ENCODE measurements at regions of chr16 and their contacts with region 1.

Region 1: GRCh38 chr16:30018731-30019158 is 4.3 kb upstream of the C16orf92 start:
- DNase-seq: peak; percentile 28
- H3K4me3 ChIP-seq: no peak overlapping the region
- H3K27ac ChIP-seq: no peak overlapping the region
- H3K4me1 ChIP-seq: peaks cover 5% of the 10 kb centered on the region
- H3K27me3 ChIP-seq: no peaks in the 10 kb centered on the region
- CTCF ChIP-seq: no peak

Region 2: GRCh38 chr16:29694384-29695195 is 324.2 kb before region 1 on chr16:
- CTCF ChIA-PET with region 1: no interaction called
- dilution Hi-C with region 1: loop called (anchors 5 kb)
- in situ Hi-C with region 1: no loop called
- intact Hi-C with region 1: no loop called
- DNase-seq: no peak
- H3K4me3 ChIP-seq: no peak overlapping the region
- H3K27ac ChIP-seq: no peak overlapping the region
- H3K4me1 ChIP-seq: no peaks in the 10 kb centered on the region
- H3K27me3 ChIP-seq: no peaks in the 10 kb centered on the region
- CTCF ChIP-seq: no peak

Region 3: GRCh38 chr16:29862884-29863668 is 155.7 kb before region 1 on chr16 and contains the start of gene CDIPT:
- CTCF ChIA-PET with region 1: no interaction called
- dilution Hi-C with region 1: no loop called
- in situ Hi-C with region 1: no loop called
- intact Hi-C with region 1: loop called (anchors 1 kb)
- DNase-seq: peak; percentile 92
- H3K4me3 ChIP-seq: peak within 1 kb of the TSS; percentile 83 to 97 (median 89)
- H3K27ac ChIP-seq: peak within 1 kb of the TSS; percentile 98
- H3K4me1 ChIP-seq: peaks cover 3% of the 10 kb centered on the region
- H3K27me3 ChIP-seq: no peaks in the 10 kb centered on the region
- CTCF ChIP-seq: peak; percentile 58 to 72
- total RNA-seq, gene CDIPT: 47.8 to 72.2 TPM

Region 4: DNA sequence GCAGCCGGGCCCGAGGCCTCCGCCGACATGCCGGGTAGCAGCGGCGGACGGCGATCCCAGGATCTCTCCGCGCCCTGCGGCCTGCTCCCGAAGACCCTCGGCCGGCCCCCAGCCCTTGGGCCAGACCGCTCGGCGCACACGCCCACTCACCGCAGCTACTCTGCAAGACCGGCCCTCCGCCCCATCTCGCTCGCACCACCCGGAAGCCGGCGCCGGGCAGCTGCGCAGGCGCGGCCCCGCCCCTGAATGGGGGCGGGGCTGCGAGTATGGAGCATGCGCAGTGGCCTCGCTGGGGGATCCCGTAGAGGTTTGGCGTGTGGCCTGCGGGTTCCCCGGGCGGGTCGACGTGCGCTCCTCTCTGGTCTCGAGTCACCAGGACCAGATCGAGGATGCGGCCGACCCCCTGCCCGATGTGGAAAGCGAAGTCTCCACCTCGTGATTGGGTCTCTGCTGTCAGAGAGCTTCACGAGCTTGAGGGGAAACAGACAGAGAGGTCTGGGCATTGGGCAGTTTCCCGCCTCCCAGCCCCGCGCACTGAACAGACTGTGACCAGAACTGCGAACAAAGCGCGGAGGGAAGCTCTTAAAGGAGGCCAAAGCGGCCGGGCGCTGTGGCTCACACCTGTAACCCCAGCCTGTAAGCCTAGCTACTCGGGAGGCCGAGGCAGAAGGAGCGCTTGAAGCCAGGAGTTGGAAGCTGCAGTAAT is 92.6 kb before region 1 on chr16 and contains the start of gene KCTD13:
- CTCF ChIA-PET with region 1: no interaction called
- dilution Hi-C with region 1: loop called (anchors 5 kb)
- in situ Hi-C with region 1: no loop called
- intact Hi-C with region 1: no loop called
- DNase-seq: peak; percentile 80
- H3K4me3 ChIP-seq: peak within 1 kb of the TSS; percentile 40 to 98 (median 89)
- H3K27ac ChIP-seq: peak within 1 kb of the TSS; percentile 63
- H3K4me1 ChIP-seq: peaks cover 10% of the 10 kb centered on the region
- H3K27me3 ChIP-seq: no peaks in the 10 kb centered on the region
- CTCF ChIP-seq: no peak
- total RNA-seq, gene KCTD13: 11.8 to 27.4 TPM